Upper lobe of right lung (tissue), 1 donor: ENCODE measurements at regions of chr9 and their contacts with region 1.

Region 1: GRCh38 chr9:136283291-136284235 is 20.3 kb downstream of the CCDC187 start:
- DNase-seq: peak; percentile 83
- ATAC-seq: peak; percentile 92
- H3K4me3 ChIP-seq: peak overlapping the region; percentile 22
- H3K27ac ChIP-seq: no peak overlapping the region
- H3K4me1 ChIP-seq: peaks cover 4% of the 10 kb centered on the region
- H3K27me3 ChIP-seq: peaks cover 21% of the 10 kb centered on the region
- CTCF ChIP-seq: peak; percentile 82

Region 2: DNA sequence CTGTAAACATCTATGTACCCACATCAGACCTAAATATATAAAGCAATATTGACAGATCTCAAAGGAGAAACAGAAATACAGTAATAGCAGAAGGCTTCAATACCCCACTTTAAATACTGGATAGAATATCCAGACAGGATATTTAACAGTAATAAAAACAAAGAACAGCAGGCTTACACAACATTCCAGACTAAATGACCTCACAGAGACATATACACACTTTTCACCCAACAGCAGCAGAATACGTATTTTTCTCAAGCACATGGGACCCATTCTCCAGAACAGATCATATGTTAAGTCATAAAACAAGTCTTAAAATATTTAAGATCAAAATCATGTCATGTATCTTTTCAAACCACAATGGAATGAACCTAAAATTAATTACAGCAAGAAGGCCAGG is 453.1 kb before region 1 on chr9:
- intact Hi-C with region 1: no loop called
- DNase-seq: no peak
- ATAC-seq: no peak
- H3K4me3 ChIP-seq: no peak overlapping the region
- H3K27ac ChIP-seq: no peak overlapping the region
- H3K4me1 ChIP-seq: no peaks in the 10 kb centered on the region
- H3K27me3 ChIP-seq: no peaks in the 10 kb centered on the region
- CTCF ChIP-seq: no peak

Region 3: GRCh38 chr9:136170006-136170901 is 113.3 kb before region 1 on chr9:
- intact Hi-C with region 1: loop called (anchors 10 kb)
- DNase-seq: no peak
- ATAC-seq: peak; percentile 65
- H3K4me3 ChIP-seq: no peak overlapping the region
- H3K27ac ChIP-seq: no peak overlapping the region
- H3K4me1 ChIP-seq: no peaks in the 10 kb centered on the region
- H3K27me3 ChIP-seq: peaks cover 40% of the 10 kb centered on the region
- CTCF ChIP-seq: peak; percentile 52

Region 4: GRCh38 chr9:136451221-136451877 is 167.8 kb after region 1 on chr9:
- intact Hi-C with region 1: no loop called
- DNase-seq: no peak
- ATAC-seq: no peak
- H3K4me3 ChIP-seq: no peak overlapping the region
- H3K27ac ChIP-seq: no peak overlapping the region
- H3K4me1 ChIP-seq: no peaks in the 10 kb centered on the region
- H3K27me3 ChIP-seq: no peaks in the 10 kb centered on the region
- CTCF ChIP-seq: no peak